ENCODE measurements at regions of chr20 and their contacts with region 1.

Region 1: GRCh38 chr20:46349035-46349741 is 40.9 kb upstream of the CDH22 start:
- DNase-seq: peak; percentile 90
- H3K4me3 ChIP-seq: peak overlapping the region in 1 of 2 experiments; percentile 28; a peak in 1 of 4 replicates
- H3K27ac ChIP-seq: 0 out of 4 replicates have a peak overlapping the region, but pooled peaks of 1 of the 2 experiments have one; percentile 81
- H3K4me1 ChIP-seq: peaks cover 16 to 51% of the 10 kb centered on the region in 2 experiments; a peak in 3 of 4 replicates
- H3K27me3 ChIP-seq: no peaks in the 10 kb centered on the region
- CTCF ChIP-seq: peak; percentile 82
- EP300 ChIP-seq: no peak
- RAD21 ChIP-seq: peak; percentile 93

Region 2: GRCh38 chr20:45792332-45792686 is 556.9 kb before region 1 on chr20:
- CTCF ChIA-PET with region 1: no interaction called
- POLR2A ChIA-PET with region 1: no interaction called
- DNase-seq: peak; percentile 20
- H3K4me3 ChIP-seq: peak overlapping the region; percentile 87 to 98
- H3K27ac ChIP-seq: peak overlapping the region; percentile 54 to 66; a peak in 2 of 4 replicates
- H3K4me1 ChIP-seq: peaks cover 0 to 9% of the 10 kb centered on the region in 2 experiments; a peak in 2 of 4 replicates
- H3K27me3 ChIP-seq: no peaks in the 10 kb centered on the region
- CTCF ChIP-seq: no peak
- EP300 ChIP-seq: no peak
- RAD21 ChIP-seq: no peak

Region 3: GRCh38 chr20:46073443-46073842 is 275.7 kb before region 1 on chr20:
- CTCF ChIA-PET with region 1: no interaction called
- POLR2A ChIA-PET with region 1: no interaction called
- DNase-seq: no peak
- H3K4me3 ChIP-seq: no peak overlapping the region
- H3K27ac ChIP-seq: no peak overlapping the region
- H3K4me1 ChIP-seq: 0 out of 4 replicates have a peak, but pooled peaks cover 0 to 7% of the 10 kb centered on the region in 2 experiments
- H3K27me3 ChIP-seq: no peaks in the 10 kb centered on the region
- CTCF ChIP-seq: no peak
- EP300 ChIP-seq: no peak
- RAD21 ChIP-seq: no peak

Region 4: GRCh38 chr20:46139908-46140482 is 209.2 kb before region 1 on chr20:
- CTCF ChIA-PET with region 1: interaction called, 219 read pairs
- POLR2A ChIA-PET with region 1: no interaction called
- DNase-seq: peak; percentile 68
- H3K4me3 ChIP-seq: no peak overlapping the region
- H3K27ac ChIP-seq: peak overlapping the region in 1 of 2 experiments; percentile 99; a peak in 2 of 4 replicates
- H3K4me1 ChIP-seq: peaks cover 0 to 72% of the 10 kb centered on the region in 2 experiments; a peak in 2 of 4 replicates
- H3K27me3 ChIP-seq: peaks cover 31% of the 10 kb centered on the region; the same call in 1 of the 2 replicates
- CTCF ChIP-seq: no peak
- EP300 ChIP-seq: no peak; a peak in 1 of 4 replicates
- RAD21 ChIP-seq: 0 out of 2 replicates have a peak, but pooled peaks have one; percentile 5

Region 5: GRCh38 chr20:46174469-46175128 is 174.6 kb before region 1 on chr20:
- CTCF ChIA-PET with region 1: interaction called, 33 read pairs
- POLR2A ChIA-PET with region 1: no interaction called
- DNase-seq: peak; percentile 95
- H3K4me3 ChIP-seq: no peak overlapping the region; a peak in 1 of 4 replicates
- H3K27ac ChIP-seq: no peak overlapping the region
- H3K4me1 ChIP-seq: peaks cover 0 to 21% of the 10 kb centered on the region in 2 experiments; a peak in 2 of 4 replicates
- H3K27me3 ChIP-seq: peaks cover 21% of the 10 kb centered on the region
- CTCF ChIP-seq: peak; percentile 44
- EP300 ChIP-seq: no peak
- RAD21 ChIP-seq: peak; percentile 72

Region 6: GRCh38 chr20:46268131-46268614 is 81.0 kb before region 1 on chr20:
- CTCF ChIA-PET with region 1: interaction called, 16 read pairs
- POLR2A ChIA-PET with region 1: no interaction called
- DNase-seq: peak; percentile 48
- H3K4me3 ChIP-seq: no peak overlapping the region
- H3K27ac ChIP-seq: no peak overlapping the region
- H3K4me1 ChIP-seq: peaks cover 0 to 12% of the 10 kb centered on the region in 2 experiments; a peak in 1 of 4 replicates
- H3K27me3 ChIP-seq: no peaks in the 10 kb centered on the region
- CTCF ChIP-seq: no peak
- EP300 ChIP-seq: no peak
- RAD21 ChIP-seq: no peak

Region 7: GRCh38 chr20:46316984-46317684 is 32.1 kb before region 1 on chr20:
- CTCF ChIA-PET with region 1: interaction called, 59 read pairs
- POLR2A ChIA-PET with region 1: no interaction called
- DNase-seq: no peak
- H3K4me3 ChIP-seq: no peak overlapping the region
- H3K27ac ChIP-seq: no peak overlapping the region
- H3K4me1 ChIP-seq: peaks cover 0 to 3% of the 10 kb centered on the region in 2 experiments; a peak in 1 of 4 replicates
- H3K27me3 ChIP-seq: peaks cover 30% of the 10 kb centered on the region
- CTCF ChIP-seq: no peak
- EP300 ChIP-seq: no peak
- RAD21 ChIP-seq: no peak

Region 8: DNA sequence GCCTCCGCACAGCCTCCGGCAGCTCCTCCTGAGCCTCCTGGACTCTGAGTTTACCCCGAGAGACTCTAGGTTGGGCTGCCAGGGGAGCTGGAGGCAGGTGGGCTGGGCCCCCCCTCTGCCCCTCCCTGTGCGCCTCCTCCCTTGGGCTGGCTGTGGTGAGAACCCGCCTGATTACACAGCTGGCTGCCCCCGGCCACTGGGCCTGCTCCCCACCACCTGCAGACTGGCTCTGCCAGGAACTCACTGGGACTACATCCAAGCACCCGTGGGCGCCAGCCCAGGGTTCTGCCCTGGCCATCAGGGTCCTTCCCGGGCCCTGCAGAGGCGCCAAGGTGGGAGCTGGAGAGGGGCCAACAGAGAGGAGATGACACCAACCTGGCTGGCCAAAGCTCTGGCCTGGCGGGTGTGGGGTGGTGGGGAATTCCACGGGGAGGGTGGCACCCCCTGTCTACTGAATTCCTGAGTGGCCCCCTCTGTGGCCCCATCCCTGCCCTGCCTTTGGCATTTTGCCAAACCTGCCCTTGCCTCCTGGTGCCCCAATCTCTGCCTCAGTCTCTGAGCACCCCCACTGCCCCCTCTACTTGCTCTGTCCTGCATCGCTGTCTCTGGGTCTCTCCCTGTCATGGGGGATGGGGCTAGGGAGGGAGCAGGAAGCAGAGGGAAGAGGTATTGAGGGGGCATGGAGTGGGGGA is 19.0 kb before region 1 on chr20:
- CTCF ChIA-PET with region 1: interaction called, 54 read pairs
- POLR2A ChIA-PET with region 1: interaction called, 5 read pairs
- DNase-seq: peak; percentile 55
- H3K4me3 ChIP-seq: no peak overlapping the region
- H3K27ac ChIP-seq: peak overlapping the region in 1 of 2 experiments; percentile 43; a peak in 2 of 4 replicates
- H3K4me1 ChIP-seq: peaks cover 0 to 67% of the 10 kb centered on the region in 2 experiments; a peak in 2 of 4 replicates
- H3K27me3 ChIP-seq: 0 out of 2 replicates have a peak, but pooled peaks cover 8% of the 10 kb centered on the region
- CTCF ChIP-seq: no peak
- EP300 ChIP-seq: peak in 1 of 2 experiments; percentile 36; a peak in 1 of 4 replicates
- RAD21 ChIP-seq: no peak

Region 9: DNA sequence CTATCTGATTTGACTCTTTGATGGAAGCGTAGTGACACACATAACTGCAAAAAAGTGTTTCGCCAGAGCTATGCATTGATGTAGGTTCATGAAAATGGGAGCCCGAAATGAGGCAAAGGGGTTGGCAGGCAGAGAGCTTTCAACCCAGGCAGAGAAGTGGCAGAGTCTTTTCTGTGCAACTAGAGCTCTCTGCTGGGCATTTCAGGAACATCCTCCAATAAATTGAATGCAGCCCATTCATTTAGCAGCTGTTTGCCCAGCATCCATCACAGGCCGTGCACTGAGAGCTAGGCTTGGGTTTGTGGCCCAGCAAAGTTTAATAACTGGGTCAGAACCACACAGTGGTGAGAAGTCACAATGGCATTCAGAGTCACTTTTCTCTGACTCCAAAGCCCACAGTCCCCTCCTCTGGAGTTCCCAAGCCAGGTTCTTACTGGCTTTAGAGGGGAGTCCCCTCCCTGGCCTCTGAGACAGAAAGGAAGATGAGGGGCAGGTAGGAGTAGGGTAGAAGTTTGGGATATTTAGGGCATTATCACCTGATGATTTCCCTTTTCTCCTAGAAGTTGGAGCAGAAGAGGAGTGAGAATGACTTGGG is 89.1 kb after region 1 on chr20:
- CTCF ChIA-PET with region 1: interaction called, 14 read pairs
- POLR2A ChIA-PET with region 1: no interaction called
- DNase-seq: peak; percentile 65
- H3K4me3 ChIP-seq: no peak overlapping the region
- H3K27ac ChIP-seq: no peak overlapping the region
- H3K4me1 ChIP-seq: peaks cover 0 to 10% of the 10 kb centered on the region in 2 experiments; a peak in 1 of 4 replicates
- H3K27me3 ChIP-seq: no peaks in the 10 kb centered on the region
- CTCF ChIP-seq: peak; percentile 45
- EP300 ChIP-seq: no peak
- RAD21 ChIP-seq: peak; percentile 84

Measured in SK-N-SH (cell line).